CD8-positive, alpha-beta T cell (primary cell): ENCODE measurements at regions of chr1 and their contacts with region 1.

Region 1: GRCh38 chr1:212035123-212035834 is at the starts of genes DTL and INTS7:
- DNase-seq: peak; percentile 95 to 100 (median 98)
- ATAC-seq: peak; percentile 90
- H3K4me3 ChIP-seq: peak within 1 kb of the TSS; percentile 77 to 98
- H3K4me3 Mint-ChIP-seq: peak within 1 kb of the TSS; percentile 99
- H3K27ac ChIP-seq: peak within 1 kb of the TSS; percentile 75 to 82
- H3K27ac Mint-ChIP-seq: peak within 1 kb of the TSS; percentile 98
- H3K4me1 ChIP-seq: peaks cover 19% of the 10 kb centered on the region
- H3K4me1 Mint-ChIP-seq: peaks cover 47% of the 10 kb centered on the region
- H3K27me3 ChIP-seq: no peaks in the 10 kb centered on the region
- H3K27me3 Mint-ChIP-seq: no peaks in the 10 kb centered on the region
- CTCF ChIP-seq: peak; percentile 93
- total RNA-seq, gene DTL: 1.0 to 1.2 TPM
- total RNA-seq, gene INTS7: 2.4 to 3.3 TPM

Region 2: DNA sequence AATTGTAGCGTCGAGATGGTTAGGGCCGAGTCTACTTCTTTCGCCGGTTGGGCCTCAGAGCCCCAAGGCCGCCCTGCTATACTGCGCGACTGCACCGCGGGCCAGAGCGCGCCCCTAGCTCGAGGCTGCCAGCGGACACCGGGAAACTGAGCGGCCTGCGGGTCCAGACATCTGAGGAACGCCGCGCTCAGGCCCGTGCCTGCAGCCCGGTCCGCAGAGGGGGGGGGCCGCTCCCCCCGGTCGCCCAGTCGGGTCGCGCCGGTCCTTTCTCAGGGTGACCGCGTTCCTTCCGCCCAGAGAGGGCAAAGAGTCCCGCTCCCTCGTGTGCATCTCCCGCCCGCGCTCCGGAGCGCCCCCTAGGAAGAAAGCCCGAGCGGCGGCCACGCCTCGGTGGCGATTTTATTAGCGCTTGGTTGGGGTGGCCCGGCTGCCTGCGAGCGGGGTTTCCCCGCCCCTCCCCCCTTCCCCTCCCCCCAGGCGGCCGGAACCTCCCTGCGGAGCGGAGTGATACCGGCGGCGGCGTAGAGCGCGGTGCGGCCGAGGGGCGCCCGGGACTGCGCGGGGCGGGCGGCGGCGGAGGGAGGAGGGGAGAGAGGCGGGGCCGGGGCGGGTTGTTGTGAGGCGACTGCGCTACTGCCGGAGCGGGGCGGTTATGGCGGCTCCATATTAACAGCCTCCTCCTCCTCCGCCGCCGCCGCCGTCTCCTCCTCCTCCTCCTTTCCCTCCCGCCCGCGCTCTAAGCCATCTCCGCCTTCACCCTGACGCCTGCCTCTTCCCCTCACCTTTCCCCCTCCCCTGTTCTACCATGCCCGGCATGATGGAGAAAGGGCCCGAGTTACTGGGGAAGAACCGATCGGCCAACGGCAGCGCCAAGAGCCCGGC is 776.3 kb before region 1 on chr1 and contains the start of gene RCOR3:
- CTCF ChIA-PET with region 1: no interaction called
- POLR2A ChIA-PET with region 1: no interaction called
- intact Hi-C with region 1: loop called in 1 of 2 experiments (anchors 1 kb)
- DNase-seq: peak; percentile 81 to 96 (median 91)
- ATAC-seq: peak; percentile 76
- H3K4me3 ChIP-seq: peak within 1 kb of the TSS; percentile 74 to 88
- H3K4me3 Mint-ChIP-seq: peak within 1 kb of the TSS; percentile 95
- H3K27ac ChIP-seq: peak within 1 kb of the TSS; percentile 80 to 84
- H3K27ac Mint-ChIP-seq: peak within 1 kb of the TSS; percentile 94
- H3K4me1 ChIP-seq: peaks cover 16% of the 10 kb centered on the region
- H3K4me1 Mint-ChIP-seq: peaks cover 18% of the 10 kb centered on the region
- H3K27me3 ChIP-seq: no peaks in the 10 kb centered on the region
- H3K27me3 Mint-ChIP-seq: no peaks in the 10 kb centered on the region
- CTCF ChIP-seq: peak; percentile 40
- total RNA-seq, gene RCOR3: 54.6 to 61.1 TPM

Region 3: DNA sequence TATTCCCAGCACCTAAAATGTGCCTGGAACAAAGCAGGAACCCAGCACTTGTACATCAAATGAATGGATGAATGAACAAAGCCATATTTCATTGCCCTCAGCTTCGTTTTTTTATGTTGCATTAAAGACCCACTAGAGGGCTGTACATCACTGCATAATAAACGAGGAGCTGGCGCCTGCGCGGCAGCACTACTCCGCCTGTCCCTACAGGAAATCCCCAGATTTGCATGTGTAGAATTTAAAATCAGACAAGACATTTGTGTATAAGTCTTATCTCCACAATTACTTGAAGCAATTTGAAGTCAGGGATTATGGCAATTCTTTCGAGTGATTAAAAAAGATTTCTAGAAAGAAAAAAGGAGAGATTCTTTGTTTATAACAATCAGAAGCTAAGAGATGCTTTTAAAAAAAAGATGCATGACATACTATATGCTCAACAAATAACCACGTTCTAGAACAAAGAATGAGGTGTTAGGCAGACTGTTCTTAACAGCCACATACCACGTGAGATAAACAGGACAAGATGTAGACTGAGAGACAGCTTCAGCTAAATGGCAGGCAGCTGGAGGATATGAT is 354.4 kb before region 1 on chr1:
- CTCF ChIA-PET with region 1: interaction called, 30 read pairs
- POLR2A ChIA-PET with region 1: interaction called, 8 read pairs
- intact Hi-C with region 1: loop called (anchors 1 kb)
- DNase-seq: peak; percentile 45 to 93 (median 74)
- ATAC-seq: peak; percentile 93
- H3K4me3 ChIP-seq: no peak overlapping the region
- H3K4me3 Mint-ChIP-seq: no peak overlapping the region
- H3K27ac ChIP-seq: peak overlapping the region; percentile 18 to 85
- H3K27ac Mint-ChIP-seq: peak overlapping the region; percentile 94
- H3K4me1 ChIP-seq: peaks cover 8% of the 10 kb centered on the region
- H3K4me1 Mint-ChIP-seq: peaks cover 19% of the 10 kb centered on the region
- H3K27me3 ChIP-seq: no peaks in the 10 kb centered on the region
- H3K27me3 Mint-ChIP-seq: no peaks in the 10 kb centered on the region
- CTCF ChIP-seq: peak; percentile 88

Region 4: GRCh38 chr1:212045981-212046380 is 10.7 kb after region 1 on chr1:
- CTCF ChIA-PET with region 1: interaction called, 13 read pairs
- POLR2A ChIA-PET with region 1: interaction called, 4 read pairs
- intact Hi-C with region 1: no loop called
- DNase-seq: no peak
- ATAC-seq: no peak
- H3K4me3 ChIP-seq: no peak overlapping the region
- H3K4me3 Mint-ChIP-seq: no peak overlapping the region
- H3K27ac ChIP-seq: no peak overlapping the region
- H3K27ac Mint-ChIP-seq: no peak overlapping the region
- H3K4me1 ChIP-seq: no peaks in the 10 kb centered on the region
- H3K4me1 Mint-ChIP-seq: peaks cover 1% of the 10 kb centered on the region
- H3K27me3 ChIP-seq: no peaks in the 10 kb centered on the region
- H3K27me3 Mint-ChIP-seq: peaks cover 1% of the 10 kb centered on the region
- CTCF ChIP-seq: no peak

Region 5: GRCh38 chr1:212284744-212285684 is 249.7 kb after region 1 on chr1 and contains the start of gene PPP2R5A:
- CTCF ChIA-PET with region 1: interaction called, 19 read pairs
- POLR2A ChIA-PET with region 1: interaction called, 31 read pairs
- intact Hi-C with region 1: loop called (anchors 1 kb)
- DNase-seq: peak; percentile 96 to 100 (median 98)
- ATAC-seq: peak; percentile 85
- H3K4me3 ChIP-seq: peak within 1 kb of the TSS; percentile 89 to 95
- H3K4me3 Mint-ChIP-seq: peak within 1 kb of the TSS; percentile 96
- H3K27ac ChIP-seq: peak within 1 kb of the TSS; percentile 95 to 96
- H3K27ac Mint-ChIP-seq: peak within 1 kb of the TSS; percentile 99
- H3K4me1 ChIP-seq: peaks cover 32% of the 10 kb centered on the region
- H3K4me1 Mint-ChIP-seq: peaks cover 43% of the 10 kb centered on the region
- H3K27me3 ChIP-seq: no peaks in the 10 kb centered on the region
- H3K27me3 Mint-ChIP-seq: no peaks in the 10 kb centered on the region
- CTCF ChIP-seq: no peak
- total RNA-seq, gene PPP2R5A: 57.8 to 60.5 TPM

Region 6: DNA sequence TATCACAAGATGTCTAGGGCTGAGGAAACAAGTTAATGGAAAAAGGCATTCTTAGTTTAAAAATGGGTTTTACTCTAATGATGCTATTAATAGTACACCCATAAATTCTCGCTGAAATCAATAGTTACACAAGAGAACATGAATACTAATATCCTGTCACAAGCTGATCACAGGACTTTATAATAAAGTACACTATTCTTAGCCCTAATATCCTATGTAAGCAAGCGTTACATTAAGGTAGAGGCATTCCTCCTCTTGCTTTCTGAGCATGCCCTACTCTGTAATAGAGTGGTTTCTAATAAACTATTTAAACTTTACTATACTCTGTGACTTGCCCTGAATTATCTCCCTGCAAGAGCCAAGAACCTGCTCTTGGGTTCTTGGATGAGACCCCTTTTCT is 385.9 kb after region 1 on chr1:
- CTCF ChIA-PET with region 1: no interaction called
- POLR2A ChIA-PET with region 1: no interaction called
- intact Hi-C with region 1: no loop called
- DNase-seq: no peak
- ATAC-seq: no peak
- H3K4me3 ChIP-seq: no peak overlapping the region
- H3K4me3 Mint-ChIP-seq: no peak overlapping the region
- H3K27ac ChIP-seq: no peak overlapping the region
- H3K27ac Mint-ChIP-seq: no peak overlapping the region
- H3K4me1 ChIP-seq: no peaks in the 10 kb centered on the region
- H3K4me1 Mint-ChIP-seq: no peaks in the 10 kb centered on the region
- H3K27me3 ChIP-seq: no peaks in the 10 kb centered on the region
- H3K27me3 Mint-ChIP-seq: peaks cover 2% of the 10 kb centered on the region
- CTCF ChIP-seq: no peak

Region 7: GRCh38 chr1:212455803-212456528 is 420.7 kb after region 1 on chr1:
- CTCF ChIA-PET with region 1: interaction called, 21 read pairs
- POLR2A ChIA-PET with region 1: no interaction called
- intact Hi-C with region 1: loop called in 1 of 2 experiments (anchors 1 kb)
- DNase-seq: peak; percentile 68 to 92 (median 81)
- ATAC-seq: peak; percentile 80
- H3K4me3 ChIP-seq: no peak overlapping the region
- H3K4me3 Mint-ChIP-seq: no peak overlapping the region
- H3K27ac ChIP-seq: no peak overlapping the region
- H3K27ac Mint-ChIP-seq: no peak overlapping the region
- H3K4me1 ChIP-seq: no peaks in the 10 kb centered on the region
- H3K4me1 Mint-ChIP-seq: peaks cover 2% of the 10 kb centered on the region
- H3K27me3 ChIP-seq: no peaks in the 10 kb centered on the region
- H3K27me3 Mint-ChIP-seq: no peaks in the 10 kb centered on the region
- CTCF ChIP-seq: peak; percentile 94

Region 8: DNA sequence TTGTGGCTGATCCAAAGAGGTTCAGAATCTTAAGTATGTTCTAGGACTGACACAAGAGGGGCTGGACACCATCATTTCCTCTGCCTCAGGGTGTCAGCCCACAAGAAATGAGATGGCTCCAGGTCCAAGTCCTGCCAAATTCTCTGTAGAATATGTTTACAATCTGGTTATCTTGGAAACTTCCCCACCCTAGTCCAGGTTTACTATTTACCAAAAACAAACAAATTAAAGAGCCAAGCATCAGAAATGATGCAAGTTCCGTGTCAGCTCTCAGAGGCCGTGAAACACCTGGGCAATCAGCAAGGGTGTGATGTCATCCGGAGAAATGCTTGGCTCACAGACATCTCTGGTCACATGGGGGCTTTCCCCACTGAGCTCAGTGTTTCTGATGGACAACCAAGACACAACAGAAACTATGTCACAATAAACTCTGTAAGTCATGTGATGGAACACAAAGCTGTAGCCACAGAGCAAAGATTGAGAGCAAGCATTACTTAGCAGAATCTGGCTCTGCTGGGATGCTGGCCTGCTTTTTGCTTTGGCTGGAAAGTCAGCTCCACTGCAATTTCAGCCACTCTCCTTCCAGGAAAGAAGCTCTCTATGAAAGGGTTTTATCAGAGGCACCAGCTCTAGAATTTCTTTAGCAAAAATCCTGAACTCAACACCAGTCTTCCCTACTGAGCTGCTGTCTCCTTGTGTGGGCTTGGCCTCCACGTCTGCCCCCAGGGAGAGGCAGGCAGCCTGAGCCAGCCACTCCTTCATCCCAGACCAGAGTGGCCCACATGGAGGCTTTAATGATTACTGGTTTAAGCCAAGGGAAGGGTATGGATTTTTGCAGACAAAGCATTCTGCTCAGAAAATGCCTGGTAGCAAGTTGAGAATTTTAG is 453.4 kb after region 1 on chr1:
- CTCF ChIA-PET with region 1: no interaction called
- POLR2A ChIA-PET with region 1: no interaction called
- intact Hi-C with region 1: no loop called
- DNase-seq: peak in 2 of 9 experiments; percentile 35 to 55
- ATAC-seq: peak; percentile 38
- H3K4me3 ChIP-seq: no peak overlapping the region
- H3K4me3 Mint-ChIP-seq: no peak overlapping the region
- H3K27ac ChIP-seq: no peak overlapping the region
- H3K27ac Mint-ChIP-seq: no peak overlapping the region
- H3K4me1 ChIP-seq: no peaks in the 10 kb centered on the region
- H3K4me1 Mint-ChIP-seq: no peaks in the 10 kb centered on the region
- H3K27me3 ChIP-seq: no peaks in the 10 kb centered on the region
- H3K27me3 Mint-ChIP-seq: no peaks in the 10 kb centered on the region
- CTCF ChIP-seq: no peak

Region 9: GRCh38 chr1:212791676-212792395 is 756.6 kb after region 1 on chr1 and contains the starts of genes NSL1 and TATDN3:
- CTCF ChIA-PET with region 1: no interaction called
- POLR2A ChIA-PET with region 1: no interaction called
- intact Hi-C with region 1: loop called in 1 of 2 experiments (anchors 10 kb)
- DNase-seq: peak; percentile 87 to 98 (median 95)
- ATAC-seq: peak; percentile 93
- H3K4me3 ChIP-seq: peak within 1 kb of the TSS; percentile 93 to 96
- H3K4me3 Mint-ChIP-seq: peak within 1 kb of the TSS; percentile 97
- H3K27ac ChIP-seq: peak within 1 kb of the TSS; percentile 79 to 87
- H3K27ac Mint-ChIP-seq: peak within 1 kb of the TSS; percentile 96
- H3K4me1 ChIP-seq: peaks cover 22% of the 10 kb centered on the region
- H3K4me1 Mint-ChIP-seq: peaks cover 37% of the 10 kb centered on the region
- H3K27me3 ChIP-seq: no peaks in the 10 kb centered on the region
- H3K27me3 Mint-ChIP-seq: no peaks in the 10 kb centered on the region
- CTCF ChIP-seq: no peak
- total RNA-seq, gene NSL1: 13.0 to 19.0 TPM
- total RNA-seq, gene TATDN3: 10.7 to 11.6 TPM